ENCODE measurements at regions of chr2 and their contacts with region 1.

Region 1: DNA sequence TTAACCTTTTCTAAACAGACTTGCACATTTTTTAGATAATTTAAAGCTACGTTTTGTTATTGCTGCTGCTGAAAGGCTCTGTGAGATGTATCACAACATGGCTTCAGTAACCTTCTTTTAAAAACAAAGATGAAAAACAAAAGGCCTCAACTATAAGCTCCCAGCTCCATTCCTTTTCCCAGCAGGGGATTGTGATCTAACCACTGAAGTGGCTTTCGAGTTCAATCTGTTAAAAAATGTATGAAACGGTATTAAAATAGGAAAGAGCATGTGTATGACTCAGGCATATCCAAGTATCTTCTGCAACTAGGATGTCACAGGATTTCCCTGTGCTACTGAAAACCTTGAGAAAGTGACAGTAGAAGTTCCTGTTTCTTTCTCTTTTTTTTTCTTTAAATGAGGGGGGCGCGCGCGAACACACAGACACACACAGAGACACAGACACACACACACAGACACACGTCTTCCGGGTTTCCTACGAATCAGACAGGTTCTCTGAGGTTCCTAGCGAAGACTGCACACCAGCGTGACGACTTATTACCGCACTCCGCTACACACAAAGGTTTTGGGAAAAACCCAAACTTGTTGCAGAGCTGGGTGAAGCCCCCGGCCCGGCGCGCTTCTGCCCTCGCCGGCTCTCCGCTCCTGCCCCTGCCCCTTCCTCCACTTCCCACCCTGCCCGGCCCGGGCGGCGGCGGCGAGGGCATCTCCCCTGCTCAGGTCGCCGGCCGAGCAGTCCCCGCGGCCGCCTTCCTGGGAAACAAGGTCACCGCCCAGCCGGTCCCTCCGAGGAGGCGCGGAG is 86.8 kb downstream of the RBMS1 start:
- DNase-seq: peak; percentile 66
- H3K4me3 Mint-ChIP-seq: peak overlapping the region; percentile 90
- H3K27ac Mint-ChIP-seq: peak overlapping the region; percentile 92
- H3K4me1 Mint-ChIP-seq: peaks cover 83% of the 10 kb centered on the region
- H3K27me3 Mint-ChIP-seq: no peaks in the 10 kb centered on the region

Region 2: DNA sequence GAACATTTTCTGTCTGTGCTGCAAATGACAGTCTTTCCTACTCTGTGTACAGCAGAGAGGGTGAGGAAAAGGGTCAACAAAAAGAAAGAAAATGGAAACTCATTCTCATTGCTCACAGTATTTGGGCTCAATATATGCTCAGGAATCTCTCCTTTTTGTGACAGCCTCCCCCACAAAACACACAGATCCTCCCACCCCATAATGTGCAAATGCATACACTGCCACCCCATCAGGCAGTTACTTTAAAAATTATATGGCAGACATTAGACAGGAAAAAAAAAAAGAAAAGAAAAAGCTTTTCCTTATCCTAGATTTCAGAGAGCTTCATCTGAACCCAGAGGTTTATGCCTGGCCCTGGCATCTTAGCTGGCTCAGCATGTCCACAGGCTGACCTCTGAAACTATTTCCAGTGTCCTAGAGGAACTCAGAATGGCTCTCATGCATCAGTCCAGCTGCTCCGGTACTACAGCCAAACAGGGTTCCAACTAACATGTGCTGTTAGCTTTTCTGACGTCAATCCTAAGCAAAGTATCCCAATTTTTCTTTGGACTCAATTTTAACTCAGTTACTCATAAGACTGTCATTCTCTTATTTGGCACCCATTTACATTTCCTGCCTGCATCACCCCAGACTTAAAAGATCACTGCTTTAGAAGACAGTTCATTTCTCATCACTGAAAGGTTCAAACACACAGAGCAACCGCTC is 19.1 kb before region 1 on chr2:
- intact Hi-C with region 1: loop called (anchors 1 kb)
- DNase-seq: no peak
- H3K4me3 Mint-ChIP-seq: peak overlapping the region; percentile 15
- H3K27ac Mint-ChIP-seq: peak overlapping the region; percentile 40
- H3K4me1 Mint-ChIP-seq: peaks cover 63% of the 10 kb centered on the region
- H3K27me3 Mint-ChIP-seq: no peaks in the 10 kb centered on the region

Region 3: GRCh38 chr2:160417745-160418397 is 11.1 kb after region 1 on chr2:
- intact Hi-C with region 1: loop called (anchors 1 kb)
- DNase-seq: no peak
- H3K4me3 Mint-ChIP-seq: peak overlapping the region; percentile 6
- H3K27ac Mint-ChIP-seq: peak overlapping the region; percentile 62
- H3K4me1 Mint-ChIP-seq: peaks cover 65% of the 10 kb centered on the region
- H3K27me3 Mint-ChIP-seq: no peaks in the 10 kb centered on the region

Region 4: GRCh38 chr2:160590664-160591063 is 183.9 kb after region 1 on chr2:
- intact Hi-C with region 1: loop called (anchors 5 kb)
- DNase-seq: no peak
- H3K4me3 Mint-ChIP-seq: no peak overlapping the region
- H3K27ac Mint-ChIP-seq: peak overlapping the region; percentile 53
- H3K4me1 Mint-ChIP-seq: peaks cover 4% of the 10 kb centered on the region
- H3K27me3 Mint-ChIP-seq: no peaks in the 10 kb centered on the region

Region 5: GRCh38 chr2:161030260-161031063 is 623.7 kb after region 1 on chr2:
- intact Hi-C with region 1: no loop called
- DNase-seq: no peak
- H3K4me3 Mint-ChIP-seq: no peak overlapping the region
- H3K27ac Mint-ChIP-seq: no peak overlapping the region
- H3K4me1 Mint-ChIP-seq: peaks cover 7% of the 10 kb centered on the region
- H3K27me3 Mint-ChIP-seq: peaks cover 4% of the 10 kb centered on the region